ENCODE measurements at regions of chr2 and their contacts with region 1.

Region 1: DNA sequence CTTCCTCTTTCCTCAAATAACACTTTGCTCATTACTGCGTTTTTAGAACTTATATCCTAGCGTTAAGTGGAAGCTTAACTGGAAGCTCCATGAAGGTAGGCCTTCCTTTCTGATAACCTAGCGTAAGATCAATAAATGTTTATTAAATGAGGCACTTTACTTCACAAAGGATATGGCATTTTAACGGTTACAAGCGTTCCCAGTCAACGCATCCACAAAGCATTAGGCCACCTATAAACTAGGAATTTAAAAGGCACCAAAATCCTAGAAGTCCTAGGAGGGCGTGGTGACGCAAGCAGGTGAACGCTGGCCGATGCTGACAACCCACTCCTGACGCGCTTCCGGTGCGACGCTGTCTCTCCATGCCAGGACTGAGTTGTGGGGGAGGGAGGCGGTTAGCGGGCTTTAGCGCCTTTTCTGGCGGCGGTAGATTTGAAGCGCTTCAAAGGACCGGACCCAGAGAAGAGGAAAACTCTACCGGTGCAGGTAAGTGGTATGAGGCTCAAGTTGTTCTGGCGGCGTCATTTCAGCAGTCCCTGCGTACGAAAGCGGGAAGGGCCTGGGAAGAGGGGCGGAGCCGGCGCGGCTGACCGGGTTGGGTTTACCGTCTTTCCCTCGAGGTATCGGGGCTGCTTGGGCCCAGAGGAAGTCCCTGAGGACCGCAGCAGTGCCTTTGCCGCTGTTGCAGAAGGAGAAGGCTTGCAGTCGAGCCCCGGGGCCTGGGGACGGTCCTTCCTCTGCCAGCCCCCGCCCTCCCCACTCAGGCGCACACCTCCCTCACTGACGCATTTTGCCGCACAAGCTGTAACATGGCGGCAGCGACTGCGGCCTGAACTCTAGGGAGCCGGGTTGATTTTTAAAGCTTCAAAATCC is at the start of gene PPIG:
- DNase-seq: peak; percentile 33
- H3K4me3 ChIP-seq: peak within 1 kb of the TSS; percentile 91
- CTCF ChIP-seq: no peak

Region 2: DNA sequence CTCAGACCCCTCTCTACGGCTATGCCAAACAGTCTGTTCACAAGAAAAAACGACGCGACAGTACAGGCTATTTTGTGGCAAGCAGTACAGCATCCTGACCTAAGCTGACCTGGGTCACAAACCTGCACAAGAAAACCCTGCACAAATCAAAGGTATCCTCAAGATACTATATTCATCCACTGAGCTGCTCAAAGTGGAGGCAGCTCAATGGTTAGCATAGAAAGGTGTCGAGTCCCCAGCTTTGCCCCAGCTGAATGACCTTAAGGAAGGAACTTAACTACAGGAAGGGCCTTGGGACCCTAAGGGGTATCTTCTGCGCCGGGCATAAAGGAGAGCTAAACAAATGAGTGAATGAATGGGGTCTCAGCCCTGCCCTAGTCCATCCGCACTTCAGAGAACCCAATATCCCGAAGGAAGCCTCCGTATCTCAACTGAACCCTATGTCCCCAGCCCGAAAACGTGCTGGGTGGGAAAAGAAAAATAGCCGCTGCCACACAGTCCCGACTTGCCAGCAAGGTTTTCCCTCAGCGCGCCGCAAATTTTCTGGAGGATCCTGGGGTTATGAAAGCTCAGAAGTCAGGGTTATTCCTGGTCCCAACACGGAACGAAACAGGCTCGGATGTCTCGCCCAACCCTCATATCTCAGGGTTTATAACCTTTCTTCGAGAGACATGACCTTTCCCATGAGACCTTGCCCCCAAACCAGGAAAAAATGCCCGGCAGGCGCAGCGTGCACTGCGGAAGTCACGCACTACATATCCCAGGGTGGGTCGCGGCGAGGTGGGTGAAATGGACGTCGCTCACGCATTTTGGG is 10.9 kb before region 1 on chr2 and contains the start of gene FASTKD1:
- CTCF ChIA-PET with region 1: no interaction called
- POLR2A ChIA-PET with region 1: interaction called, 10 read pairs
- DNase-seq: peak; percentile 16
- H3K4me3 ChIP-seq: peak within 1 kb of the TSS; percentile 82
- CTCF ChIP-seq: no peak

Region 3: GRCh38 chr2:169891593-169892298 is 307.5 kb after region 1 on chr2:
- CTCF ChIA-PET with region 1: no interaction called
- POLR2A ChIA-PET with region 1: no interaction called
- DNase-seq: no peak
- H3K4me3 ChIP-seq: no peak overlapping the region
- CTCF ChIP-seq: no peak